ENCODE measurements at regions of chr10 and their contacts with region 1.

Region 1: DNA sequence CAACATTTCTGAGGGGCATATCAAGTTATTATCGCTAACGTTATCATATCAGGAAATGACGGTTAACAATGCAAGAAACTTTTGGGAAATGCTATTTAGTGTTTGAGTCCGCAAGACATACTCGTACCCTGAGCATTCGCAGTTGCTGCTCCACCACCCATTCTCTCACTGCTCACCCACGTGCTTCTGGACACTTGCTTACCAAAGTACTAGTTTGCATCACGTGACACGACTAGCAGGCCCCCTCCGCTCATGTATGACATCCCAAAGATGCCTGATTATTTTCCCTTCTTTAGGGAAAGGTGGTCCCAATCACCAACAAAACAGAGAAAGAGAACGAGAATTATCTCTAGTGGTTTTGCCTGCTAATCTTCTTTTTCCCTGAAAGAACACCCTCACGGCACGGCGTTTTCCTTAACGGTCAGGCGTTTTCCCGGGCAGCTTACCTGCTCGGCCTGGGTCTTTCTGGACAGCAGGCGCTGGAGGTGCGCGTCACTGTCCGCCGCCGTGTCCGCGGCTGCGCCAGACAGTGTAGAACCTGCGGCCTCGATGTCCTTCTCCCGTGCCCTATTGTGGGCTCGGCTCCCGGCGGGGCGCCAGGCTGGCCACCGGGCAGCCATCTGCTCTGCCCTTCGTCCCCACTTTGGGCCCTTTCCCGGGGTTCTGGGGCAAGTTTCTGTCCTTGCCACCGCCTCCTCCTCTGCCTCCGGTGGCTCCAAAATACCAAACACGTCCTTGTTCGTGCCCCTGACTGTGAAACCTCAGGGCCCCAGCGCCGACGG is at the start of gene SUPV3L1:
- DNase-seq: peak; percentile 89 to 93 (median 91)
- H3K4me3 ChIP-seq: peak within 1 kb of the TSS; percentile 61 to 93
- H3K4me3 Mint-ChIP-seq: peak within 1 kb of the TSS; percentile 92 to 99 (median 98)
- H3K27ac ChIP-seq: peak within 1 kb of the TSS; percentile 94
- H3K27ac Mint-ChIP-seq: peak within 1 kb of the TSS; percentile 98 to 100 (median 100)
- H3K4me1 ChIP-seq: peaks cover 24% of the 10 kb centered on the region
- H3K4me1 Mint-ChIP-seq: peaks cover 31 to 51% (median 43%) of the 10 kb centered on the region in 4 donors
- H3K27me3 ChIP-seq: no peaks in the 10 kb centered on the region
- H3K27me3 Mint-ChIP-seq: no peaks in the 10 kb centered on the region
- total RNA-seq, gene SUPV3L1: 35.7 to 39.0 TPM

Region 2: DNA sequence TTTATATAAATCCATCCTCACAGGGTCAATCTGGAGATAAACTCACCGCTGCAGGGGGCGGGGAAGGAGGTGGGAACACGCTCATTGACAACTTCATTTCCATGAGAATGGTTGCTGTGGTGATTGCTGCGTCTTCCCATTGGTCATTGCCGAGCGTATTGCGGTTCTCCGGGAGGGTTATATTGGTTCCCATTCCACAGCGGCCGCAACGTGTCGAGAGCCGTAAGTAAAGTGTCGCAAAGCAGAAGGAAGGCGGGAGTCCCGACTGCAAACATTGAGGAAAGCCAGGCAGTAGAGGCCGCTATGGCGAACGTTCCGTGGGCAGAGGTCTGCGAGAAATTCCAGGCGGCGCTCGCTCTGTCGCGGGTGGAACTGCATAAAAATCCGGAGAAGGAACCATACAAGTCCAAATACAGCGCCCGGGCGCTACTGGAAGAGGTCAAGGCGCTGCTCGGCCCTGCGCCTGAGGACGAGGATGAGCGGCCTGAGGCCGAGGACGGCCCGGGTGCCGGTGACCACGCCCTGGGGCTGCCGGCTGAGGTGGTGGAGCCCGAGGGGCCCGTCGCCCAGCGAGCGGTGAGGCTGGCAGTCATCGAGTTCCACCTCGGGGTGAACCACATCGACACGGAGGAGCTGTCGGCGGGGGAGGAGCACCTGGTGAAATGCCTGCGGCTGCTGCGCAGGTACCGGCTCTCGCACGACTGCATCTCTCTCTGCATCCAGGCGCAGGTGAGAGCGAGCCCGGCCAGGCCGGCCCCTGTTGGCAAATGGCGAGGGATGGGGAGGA is 191.2 kb before region 1 on chr10 and contains the start of gene KIFBP:
- CTCF ChIA-PET with region 1: no interaction called
- POLR2A ChIA-PET with region 1: interaction called, 5 read pairs
- intact Hi-C with region 1: loop called (anchors 1 kb)
- DNase-seq: peak; percentile 82 to 90 (median 84)
- H3K4me3 ChIP-seq: peak within 1 kb of the TSS; percentile 79 to 99
- H3K4me3 Mint-ChIP-seq: peak within 1 kb of the TSS; percentile 92 to 100 (median 99)
- H3K27ac ChIP-seq: peak within 1 kb of the TSS; percentile 71
- H3K27ac Mint-ChIP-seq: peak within 1 kb of the TSS; percentile 86 to 99 (median 98)
- H3K4me1 ChIP-seq: peaks cover 49% of the 10 kb centered on the region
- H3K4me1 Mint-ChIP-seq: peaks cover 36 to 63% (median 53%) of the 10 kb centered on the region in 4 donors
- H3K27me3 ChIP-seq: no peaks in the 10 kb centered on the region
- H3K27me3 Mint-ChIP-seq: no peaks in the 10 kb centered on the region
- total RNA-seq, gene KIFBP: 17.9 to 18.5 TPM

Region 3: GRCh38 chr10:69123747-69124562 is 56.0 kb before region 1 on chr10 and contains the start of gene VPS26A:
- CTCF ChIA-PET with region 1: no interaction called
- POLR2A ChIA-PET with region 1: interaction called, 8 read pairs
- intact Hi-C with region 1: loop called (anchors 1 kb)
- DNase-seq: peak; percentile 98 to 100 (median 98)
- H3K4me3 ChIP-seq: peak within 1 kb of the TSS; percentile 47 to 81
- H3K4me3 Mint-ChIP-seq: peak within 1 kb of the TSS; percentile 92 to 96 (median 94)
- H3K27ac ChIP-seq: peak within 1 kb of the TSS; percentile 96
- H3K27ac Mint-ChIP-seq: peak within 1 kb of the TSS; percentile 96 to 99 (median 98)
- H3K4me1 ChIP-seq: peaks cover 37% of the 10 kb centered on the region
- H3K4me1 Mint-ChIP-seq: peaks cover 13 to 29% (median 21%) of the 10 kb centered on the region in 4 donors
- H3K27me3 ChIP-seq: no peaks in the 10 kb centered on the region
- H3K27me3 Mint-ChIP-seq: no peaks in the 10 kb centered on the region
- total RNA-seq, gene VPS26A: 31.7 to 35.9 TPM

Region 4: DNA sequence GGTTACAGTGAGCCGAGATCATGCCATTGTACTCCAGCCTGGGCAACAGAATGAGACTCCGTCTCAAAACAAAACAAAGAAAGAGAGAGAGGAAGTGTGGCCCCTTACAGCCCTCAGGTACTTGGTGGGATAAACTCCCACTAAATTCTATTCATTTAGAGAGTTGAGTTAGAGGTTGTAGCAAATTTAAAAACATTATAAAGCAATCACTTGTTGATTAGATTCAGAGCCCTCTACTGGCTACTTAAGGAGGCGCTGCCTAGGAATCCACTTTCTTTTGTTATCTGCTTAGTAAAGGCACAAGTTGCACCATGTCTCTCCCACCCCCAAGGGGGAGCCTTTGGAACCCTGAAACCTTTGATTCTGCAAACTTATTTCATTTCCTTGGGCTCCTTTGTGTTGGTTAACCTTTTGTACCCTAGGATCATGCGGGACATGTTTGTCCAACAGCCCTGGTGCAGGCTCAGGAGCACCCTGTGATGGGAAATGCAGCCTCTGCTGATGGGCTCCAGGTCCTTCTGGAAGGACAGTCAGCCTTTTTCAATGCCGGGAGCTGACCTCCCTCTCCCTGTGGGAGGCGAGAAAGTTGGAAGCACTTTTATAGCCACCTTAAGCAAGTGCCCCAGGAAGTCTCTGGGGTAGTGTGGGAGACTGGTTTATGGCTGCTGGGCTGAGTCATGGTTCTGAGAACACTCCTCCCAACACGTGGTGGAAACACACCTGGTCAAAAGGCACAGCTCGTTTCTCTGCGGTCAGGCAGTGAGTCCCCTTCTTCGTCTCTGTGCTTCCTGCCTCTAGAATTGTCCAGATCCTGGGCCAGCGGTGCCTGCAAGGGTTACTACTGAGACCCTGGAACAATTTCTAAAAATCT is 42.5 kb after region 1 on chr10:
- CTCF ChIA-PET with region 1: interaction called, 3 read pairs
- POLR2A ChIA-PET with region 1: interaction called, 4 read pairs
- intact Hi-C with region 1: loop called (anchors 1 kb)
- DNase-seq: peak; percentile 51 to 87 (median 54)
- H3K4me3 ChIP-seq: peak overlapping the region in 1 of 2 donors; percentile 42
- H3K4me3 Mint-ChIP-seq: peak overlapping the region; percentile 41 to 88 (median 76)
- H3K27ac ChIP-seq: peak overlapping the region; percentile 41
- H3K27ac Mint-ChIP-seq: peak overlapping the region; percentile 9 to 96 (median 78)
- H3K4me1 ChIP-seq: peaks cover 45% of the 10 kb centered on the region
- H3K4me1 Mint-ChIP-seq: peaks cover 18 to 46% (median 33%) of the 10 kb centered on the region in 4 donors
- H3K27me3 ChIP-seq: no peaks in the 10 kb centered on the region
- H3K27me3 Mint-ChIP-seq: no peaks in the 10 kb centered on the region

Region 5: DNA sequence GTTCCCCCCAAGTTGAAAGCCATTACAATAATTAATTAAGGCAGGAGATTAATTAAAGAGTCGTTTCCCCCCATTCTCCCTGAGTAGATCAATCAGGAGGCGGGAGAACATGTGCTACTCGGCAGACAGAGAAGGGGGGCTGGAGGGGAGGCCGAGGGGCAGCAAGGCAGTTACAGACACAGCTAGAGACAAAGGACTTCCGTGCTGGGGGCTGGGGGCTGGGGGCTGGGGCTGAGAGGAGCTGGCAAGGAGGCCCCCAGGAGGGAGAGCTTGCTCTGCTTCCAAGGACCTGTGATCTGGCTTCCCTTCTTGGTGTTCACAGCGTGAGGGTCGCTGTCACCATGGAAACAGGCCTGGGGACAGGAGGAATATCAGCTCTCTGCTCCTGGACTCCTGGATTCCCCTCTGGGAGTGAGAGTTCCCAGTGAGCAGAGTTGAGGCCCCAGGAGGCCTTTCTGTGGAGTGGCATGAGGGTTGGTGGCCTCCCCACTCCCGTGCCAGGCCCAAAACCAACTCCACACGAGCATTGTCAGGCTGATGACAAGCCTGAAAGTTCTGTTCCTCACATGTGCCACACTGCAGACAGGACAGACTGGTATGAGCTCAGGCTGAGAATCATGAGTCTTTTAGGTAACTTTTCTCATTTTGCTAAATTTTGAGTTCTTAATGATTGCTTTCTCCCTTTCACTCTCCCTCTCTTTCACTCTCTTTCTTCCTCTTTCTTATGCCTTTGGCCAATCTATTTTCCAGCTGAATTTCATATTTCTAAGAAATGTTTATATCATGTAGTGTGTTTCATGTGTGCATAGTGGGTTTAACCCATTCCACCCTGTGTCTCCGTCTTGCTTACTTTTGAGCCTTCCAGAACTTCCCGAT is 466.5 kb after region 1 on chr10:
- CTCF ChIA-PET with region 1: no interaction called
- POLR2A ChIA-PET with region 1: no interaction called
- intact Hi-C with region 1: no loop called
- DNase-seq: no peak
- H3K4me3 ChIP-seq: no peak overlapping the region
- H3K4me3 Mint-ChIP-seq: no peak overlapping the region
- H3K27ac ChIP-seq: no peak overlapping the region
- H3K27ac Mint-ChIP-seq: peak overlapping the region in 1 of 7 donors; percentile 81
- H3K4me1 ChIP-seq: peaks cover 12% of the 10 kb centered on the region
- H3K4me1 Mint-ChIP-seq: peaks cover 6 to 14% (median 9%) of the 10 kb centered on the region in 4 donors
- H3K27me3 ChIP-seq: no peaks in the 10 kb centered on the region
- H3K27me3 Mint-ChIP-seq: peaks cover 0 to 2% of the 10 kb centered on the region in 2 donors

Measured in CD4-positive, alpha-beta memory T cell (primary cell).